Activated CD8-positive, alpha-beta memory T cell treated with anti-CD3 and anti-CD28 coated beads, Interleukin-2, amount 10 ng/mL, durations not matched to agents 7 days and 5 days (primary cell): ENCODE measurements at regions of chr13 and their contacts with region 1.

Region 1: GRCh38 chr13:26482451-26483197 is 74.9 kb upstream of the WASF3 start:
- DNase-seq: peak; percentile 76
- ATAC-seq: peak; percentile 80
- H3K4me3 Mint-ChIP-seq: no peak overlapping the region
- H3K27ac Mint-ChIP-seq: peak overlapping the region; percentile 43
- H3K4me1 Mint-ChIP-seq: peaks cover 8% of the 10 kb centered on the region
- H3K27me3 Mint-ChIP-seq: no peaks in the 10 kb centered on the region

Region 2: GRCh38 chr13:26498656-26499591 is 16.3 kb after region 1 on chr13:
- CTCF ChIA-PET with region 1: interaction called, 32 read pairs
- DNase-seq: no peak
- ATAC-seq: no peak
- H3K4me3 Mint-ChIP-seq: no peak overlapping the region
- H3K27ac Mint-ChIP-seq: no peak overlapping the region
- H3K4me1 Mint-ChIP-seq: peaks cover 3% of the 10 kb centered on the region
- H3K27me3 Mint-ChIP-seq: peaks cover 16% of the 10 kb centered on the region